Activated T-helper 1 cell treated with anti-CD3 and anti-CD28 coated beads, Interleukin-12 subunit alpha, Interleukin-12 subunit beta, Interleukin-2, Interleukin-4 antibody, amounts not matched to agents 30 ng/mL and 10 ng/mL and 1 ng/mL, durations not matched to agents 14 hours and 24 hours and 36 hours (primary cell): ENCODE measurements at regions of chr18 and their contacts with region 1.

Region 1: GRCh38 chr18:67359873-67360838 is 156.4 kb downstream of the DSEL start:
- DNase-seq: no peak
- H3K4me3 Mint-ChIP-seq: no peak overlapping the region
- H3K27ac Mint-ChIP-seq: no peak overlapping the region
- H3K4me1 Mint-ChIP-seq: peaks cover 10% of the 10 kb centered on the region
- H3K27me3 Mint-ChIP-seq: no peaks in the 10 kb centered on the region

Region 2: GRCh38 chr18:67302043-67302442 is 58.1 kb before region 1 on chr18:
- intact Hi-C with region 1: loop called (anchors 2 kb)
- DNase-seq: no peak
- H3K4me3 Mint-ChIP-seq: no peak overlapping the region
- H3K27ac Mint-ChIP-seq: no peak overlapping the region
- H3K4me1 Mint-ChIP-seq: no peaks in the 10 kb centered on the region
- H3K27me3 Mint-ChIP-seq: peaks cover 2% of the 10 kb centered on the region

Region 3: DNA sequence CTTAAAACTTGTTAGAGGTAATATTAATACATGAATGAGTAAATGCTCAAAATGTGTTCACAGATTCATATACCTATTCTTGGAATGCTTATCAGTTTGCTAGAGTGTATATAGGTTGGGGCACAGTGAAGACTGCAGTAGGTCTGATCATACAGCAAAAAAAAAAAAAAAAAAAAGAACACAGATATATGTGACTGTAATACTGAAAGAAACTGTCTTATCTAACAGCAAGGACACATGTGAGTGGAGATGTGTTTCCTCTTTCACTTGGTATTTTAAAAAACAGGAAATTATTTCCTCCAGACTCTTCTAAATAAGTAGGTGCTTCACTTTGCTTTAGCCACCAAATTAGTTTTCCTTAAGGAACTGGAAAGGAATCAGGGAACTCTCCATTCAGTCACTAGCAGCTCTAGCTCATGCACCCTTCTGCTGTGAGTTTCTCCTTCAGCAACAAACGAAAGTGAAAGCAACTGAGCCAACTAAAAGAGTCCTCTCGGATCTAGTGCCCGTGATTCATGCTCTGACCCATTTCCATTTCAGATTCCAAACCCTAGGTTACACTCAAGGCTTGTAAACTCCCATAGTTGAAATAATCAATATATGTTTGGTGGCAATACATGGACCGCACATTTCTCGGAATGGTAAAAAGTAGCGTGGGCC is 57.8 kb after region 1 on chr18:
- intact Hi-C with region 1: loop called (anchors 2 kb)
- DNase-seq: no peak
- H3K4me3 Mint-ChIP-seq: peak overlapping the region; percentile 30
- H3K27ac Mint-ChIP-seq: no peak overlapping the region
- H3K4me1 Mint-ChIP-seq: peaks cover 8% of the 10 kb centered on the region
- H3K27me3 Mint-ChIP-seq: no peaks in the 10 kb centered on the region